ENCODE measurements at regions of chr1 and their contacts with region 1.

Region 1: DNA sequence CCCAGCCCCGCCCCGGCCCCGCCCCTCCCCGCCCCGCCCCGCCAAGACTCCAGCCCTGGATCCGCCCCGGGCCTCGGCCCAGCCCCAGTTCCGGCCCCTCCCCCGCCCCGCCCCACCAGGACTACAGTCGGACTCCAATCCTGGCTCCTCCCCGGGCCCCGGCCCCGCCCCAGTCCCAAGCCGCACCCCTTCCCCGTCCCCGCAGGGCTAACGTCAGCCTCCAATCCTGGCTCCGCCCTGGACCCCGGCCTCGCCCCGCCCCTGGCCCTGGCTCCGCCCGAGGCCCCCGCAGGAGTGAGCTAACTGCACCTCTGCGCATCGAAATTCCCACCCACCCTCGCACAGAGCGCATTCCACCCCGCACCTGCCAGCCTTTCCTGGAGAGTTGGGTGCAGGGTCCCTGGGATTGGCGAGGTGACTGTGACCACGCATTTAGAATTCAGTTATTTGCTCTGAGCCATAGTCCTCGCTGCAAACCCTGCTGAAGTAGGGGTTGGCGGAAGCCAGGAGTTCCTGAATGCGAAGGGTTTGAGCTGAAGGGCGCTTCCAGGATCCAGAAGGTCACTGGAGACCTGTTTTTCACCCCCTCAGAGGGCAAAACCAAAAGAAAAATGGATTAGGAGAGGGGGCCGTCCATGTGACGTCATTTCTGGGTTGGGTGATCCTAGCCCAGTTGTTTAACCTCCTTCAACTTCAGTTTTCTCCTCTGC is 588 bp upstream of the IGSF8 start:
- DNase-seq: peak; percentile 98
- H3K4me3 ChIP-seq: peak overlapping the region; percentile 36 to 44; a peak in 3 of 4 replicates
- H3K27ac ChIP-seq: peak overlapping the region; percentile 35 to 55; a peak in 3 of 4 replicates
- H3K4me1 ChIP-seq: peaks cover 7 to 28% of the 10 kb centered on the region in 2 experiments; a peak in 1 of 4 replicates
- H3K27me3 ChIP-seq: no peaks in the 10 kb centered on the region
- CTCF ChIP-seq: no peak
- EP300 ChIP-seq: no peak
- RAD21 ChIP-seq: no peak

Region 2: GRCh38 chr1:160085686-160086455 is 13.1 kb before region 1 on chr1:
- CTCF ChIA-PET with region 1: interaction called, 132 read pairs
- POLR2A ChIA-PET with region 1: interaction called, 5 read pairs
- DNase-seq: peak; percentile 91
- H3K4me3 ChIP-seq: no peak overlapping the region
- H3K27ac ChIP-seq: no peak overlapping the region
- H3K4me1 ChIP-seq: peaks cover 0 to 13% of the 10 kb centered on the region in 2 experiments; a peak in 1 of 4 replicates
- H3K27me3 ChIP-seq: peaks cover 22% of the 10 kb centered on the region; the same call in 1 of the 2 replicates
- CTCF ChIP-seq: peak; percentile 78
- EP300 ChIP-seq: no peak
- RAD21 ChIP-seq: peak; percentile 76

Region 3: GRCh38 chr1:160193091-160193819 is 94.2 kb after region 1 on chr1:
- CTCF ChIA-PET with region 1: interaction called, 61 read pairs
- POLR2A ChIA-PET with region 1: no interaction called
- DNase-seq: peak; percentile 80
- H3K4me3 ChIP-seq: peak overlapping the region in 1 of 2 experiments; percentile 25; a peak in 1 of 4 replicates
- H3K27ac ChIP-seq: peak overlapping the region in 1 of 2 experiments; percentile 11; a peak in 1 of 4 replicates
- H3K4me1 ChIP-seq: peaks cover 3 to 5% of the 10 kb centered on the region in 2 experiments; a peak in 2 of 4 replicates
- H3K27me3 ChIP-seq: no peaks in the 10 kb centered on the region
- CTCF ChIP-seq: peak; percentile 96
- EP300 ChIP-seq: peak in 1 of 2 experiments; percentile 22; a peak in 1 of 4 replicates
- RAD21 ChIP-seq: peak; percentile 98

Region 4: GRCh38 chr1:160226623-160227022 is 127.6 kb after region 1 on chr1:
- CTCF ChIA-PET with region 1: interaction called, 63 read pairs
- POLR2A ChIA-PET with region 1: no interaction called
- DNase-seq: no peak
- H3K4me3 ChIP-seq: no peak overlapping the region
- H3K27ac ChIP-seq: no peak overlapping the region
- H3K4me1 ChIP-seq: no peaks in the 10 kb centered on the region
- H3K27me3 ChIP-seq: no peaks in the 10 kb centered on the region
- CTCF ChIP-seq: no peak
- EP300 ChIP-seq: no peak
- RAD21 ChIP-seq: no peak

Region 5: DNA sequence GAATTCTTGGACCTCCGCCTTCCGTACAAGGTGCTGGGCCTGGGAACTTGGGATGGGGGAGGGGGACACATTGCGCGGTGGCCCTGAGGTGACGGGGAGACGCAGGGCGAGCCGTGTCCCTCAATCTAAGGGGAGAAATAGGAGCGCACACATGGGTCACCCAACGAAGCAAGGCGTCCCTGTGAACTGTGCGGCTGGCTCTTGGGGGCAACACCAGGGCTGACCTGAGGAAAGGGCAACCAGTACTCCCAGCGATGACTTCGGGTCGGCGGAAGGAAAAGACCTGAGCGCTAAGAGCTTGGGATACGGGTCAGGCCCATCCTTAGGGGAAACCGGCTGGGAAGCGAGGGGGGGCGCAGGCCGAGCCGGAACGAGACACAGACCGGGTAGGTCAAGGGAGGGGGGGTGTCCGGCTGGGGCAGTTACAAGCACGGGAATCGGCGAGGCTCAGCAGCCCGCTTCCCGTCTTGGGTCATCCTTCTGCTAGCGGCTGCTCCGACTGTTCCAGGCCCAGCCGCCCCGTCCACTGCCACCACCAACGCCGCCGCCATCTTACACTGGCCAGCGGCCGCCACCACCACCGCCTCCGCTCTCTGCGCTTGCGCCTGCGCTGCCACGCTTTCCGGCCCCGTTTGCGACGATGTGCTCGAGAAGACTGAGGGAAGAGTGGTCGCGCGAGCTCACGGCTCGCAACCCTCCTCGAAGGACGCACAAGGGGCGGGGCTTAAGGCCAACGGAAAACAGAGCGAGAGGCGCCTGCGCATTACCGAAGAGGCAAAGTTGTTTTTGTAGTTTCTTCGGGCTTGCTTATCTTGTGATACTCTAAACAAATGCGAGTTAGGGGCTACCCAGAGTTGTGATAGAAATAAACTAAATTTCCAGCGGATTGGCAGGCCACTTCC is 163.1 kb after region 1 on chr1 and contains the start of gene DCAF8:
- CTCF ChIA-PET with region 1: interaction called, 10 read pairs
- POLR2A ChIA-PET with region 1: interaction called, 3 read pairs
- DNase-seq: peak; percentile 94
- H3K4me3 ChIP-seq: peak within 1 kb of the TSS; percentile 93 to 95
- H3K27ac ChIP-seq: peak within 1 kb of the TSS; percentile 96
- H3K4me1 ChIP-seq: peaks cover 12 to 18% of the 10 kb centered on the region in 2 experiments
- H3K27me3 ChIP-seq: no peaks in the 10 kb centered on the region
- CTCF ChIP-seq: no peak
- EP300 ChIP-seq: no peak
- RAD21 ChIP-seq: no peak
- polyA plus RNA-seq, gene DCAF8: 108 and 150 TPM in 2 replicates

Measured in SK-N-SH (cell line).